Motor neuron (in vitro differentiated cells): ENCODE measurements at regions of chr16 and their contacts with region 1.

Region 1: GRCh38 chr16:84484579-84485254 is 19.7 kb downstream of the MEAK7 start:
- ATAC-seq: peak; percentile 51 to 88 (median 80)
- H3K4me3 ChIP-seq: no peak overlapping the region
- H3K27ac ChIP-seq: no peak overlapping the region
- H3K4me1 ChIP-seq: peaks cover 4 to 7% of the 10 kb centered on the region in 2 donors

Region 2: GRCh38 chr16:83926726-83927397 is 557.9 kb before region 1 on chr16:
- in situ Hi-C with region 1: loop called in 1 of 9 experiments (anchors 25 kb)
- ATAC-seq: peak; percentile 83 to 97 (median 88)
- H3K4me3 ChIP-seq: no peak overlapping the region
- H3K27ac ChIP-seq: no peak overlapping the region
- H3K4me1 ChIP-seq: peaks cover 11 to 13% of the 10 kb centered on the region in 2 donors

Region 3: DNA sequence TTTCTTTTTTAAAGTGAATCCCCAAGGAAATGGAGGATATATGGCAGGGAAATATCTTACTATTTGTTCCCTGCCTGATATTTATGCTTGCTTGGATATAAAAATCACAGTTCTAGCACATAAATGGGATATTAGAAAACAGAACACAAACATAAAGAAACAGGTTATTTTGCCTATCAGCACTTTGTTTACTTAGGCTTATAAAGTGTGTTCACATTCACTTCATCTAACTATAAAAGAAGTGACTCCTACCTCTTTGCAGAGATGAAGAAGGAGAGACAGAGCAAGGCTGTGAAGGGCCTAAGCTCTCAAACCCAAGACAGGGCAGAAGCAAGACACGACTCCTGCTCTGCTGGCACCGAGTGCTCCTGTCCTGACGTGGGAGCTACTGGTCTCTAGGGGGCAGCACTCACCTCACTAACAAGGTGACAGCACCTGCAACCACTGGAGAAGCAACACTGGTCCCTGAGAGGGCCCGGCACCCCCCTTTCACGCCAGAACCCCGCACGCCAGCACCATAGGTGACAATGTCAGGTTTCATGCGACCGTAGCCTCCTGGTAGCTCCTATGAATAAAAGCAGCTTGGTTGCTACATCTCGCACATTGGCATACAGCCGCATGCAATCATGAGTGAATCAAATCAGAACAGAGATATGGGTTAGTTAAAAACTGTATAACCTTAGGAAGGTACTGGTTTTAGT is 400.0 kb before region 1 on chr16:
- in situ Hi-C with region 1: loop called in 2 of 9 experiments (anchors 10 to 25 kb)
- ATAC-seq: peak; percentile 69 to 93 (median 79)
- H3K4me3 ChIP-seq: no peak overlapping the region
- H3K27ac ChIP-seq: no peak overlapping the region
- H3K4me1 ChIP-seq: no peaks in the 10 kb centered on the region

Region 4: DNA sequence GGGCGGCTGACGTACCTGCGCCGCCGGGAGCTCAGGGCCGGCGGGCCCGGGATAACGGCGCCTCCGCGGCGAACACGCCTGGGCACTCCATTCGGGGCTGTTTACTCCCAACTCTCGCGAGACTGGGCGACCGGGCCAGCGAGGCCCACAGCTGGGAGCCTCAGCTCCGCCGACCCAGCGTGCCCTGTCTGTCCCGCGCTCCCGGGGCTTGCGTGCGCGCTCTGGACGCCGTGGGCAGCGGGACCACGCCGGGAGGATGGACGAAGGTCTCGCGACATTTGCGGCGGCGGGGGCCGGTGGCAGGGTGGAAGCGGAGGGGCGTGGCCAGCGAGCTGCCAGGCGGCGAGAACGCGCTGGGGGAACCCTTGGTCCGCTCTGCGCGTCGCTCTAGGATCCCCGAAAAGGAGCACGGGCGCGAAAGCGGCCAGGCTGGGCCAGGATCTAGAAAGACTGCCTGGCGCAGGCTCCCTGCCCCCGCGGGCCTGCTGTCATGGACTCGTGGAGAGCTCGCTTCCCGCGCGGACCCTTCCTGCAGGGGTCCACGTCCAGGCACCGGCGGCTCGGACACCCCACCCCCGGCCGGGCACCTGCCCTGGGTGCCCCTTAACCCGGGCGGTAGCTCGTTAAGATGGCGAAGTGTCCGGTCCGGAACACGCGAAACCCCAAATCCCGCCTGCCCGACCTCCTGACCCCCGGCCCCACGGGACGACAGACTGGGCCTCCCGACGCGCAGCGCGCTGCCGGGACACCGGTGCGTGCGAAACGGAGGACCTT is 367.8 kb before region 1 on chr16 and contains the start of gene MBTPS1:
- in situ Hi-C with region 1: loop called in 2 of 9 experiments (anchors 25 kb)
- ATAC-seq: peak; percentile 92 to 97 (median 96)
- H3K4me3 ChIP-seq: peak within 1 kb of the TSS; percentile 75 to 91 (median 88)
- H3K27ac ChIP-seq: peak within 1 kb of the TSS; percentile 89 to 96
- H3K4me1 ChIP-seq: peaks cover 11 to 14% of the 10 kb centered on the region in 2 donors
- total RNA-seq, gene MBTPS1: 42.5 to 166 (median 62.3) TPM

Region 5: DNA sequence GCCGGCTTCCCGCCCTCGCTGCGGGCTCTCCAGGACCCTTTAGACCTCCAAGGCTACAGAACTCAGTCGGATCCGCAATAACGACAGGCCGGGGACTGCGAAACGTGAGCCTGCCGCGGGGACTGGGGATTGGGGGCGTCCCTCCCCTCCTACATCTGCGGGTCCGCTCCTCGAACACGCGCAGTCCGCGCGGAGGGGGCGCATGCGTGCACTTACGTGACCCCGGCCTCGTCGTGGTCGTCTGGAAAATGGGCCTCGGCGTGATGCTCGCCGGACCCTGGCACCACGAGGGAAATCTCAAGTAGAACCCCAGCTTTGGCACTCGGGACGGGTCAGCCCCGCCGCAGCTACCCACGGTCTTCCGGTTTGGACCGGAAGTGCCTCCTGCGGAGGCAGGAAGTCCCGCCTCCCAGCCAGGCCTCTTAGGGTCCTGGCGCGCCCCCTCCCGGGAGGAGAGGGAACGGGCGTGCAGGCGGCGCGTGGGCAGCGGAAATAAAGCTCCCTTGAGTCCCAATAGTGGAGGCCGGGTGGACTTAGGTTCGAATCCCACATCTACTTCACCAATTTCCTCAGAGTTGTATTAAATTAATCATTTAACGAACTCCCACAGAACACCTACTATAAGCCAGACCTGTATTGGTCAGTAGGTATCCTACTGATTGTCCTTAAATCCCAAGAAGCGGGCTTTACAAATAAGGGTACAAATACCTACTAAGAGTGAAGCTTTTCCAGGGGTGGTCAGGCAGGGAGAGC is 297.9 kb before region 1 on chr16 and contains the start of gene TAF1C:
- in situ Hi-C with region 1: loop called in 1 of 9 experiments (anchors 25 kb)
- ATAC-seq: peak; percentile 88 to 98 (median 97)
- H3K4me3 ChIP-seq: peak within 1 kb of the TSS; percentile 72 to 97 (median 83)
- H3K27ac ChIP-seq: peak within 1 kb of the TSS; percentile 25 to 55
- H3K4me1 ChIP-seq: peaks cover 9% of the 10 kb centered on the region in 2 donors
- total RNA-seq, gene TAF1C: 13.1 to 58.4 (median 18.2) TPM

Region 6: GRCh38 chr16:84277237-84277823 is 207.4 kb before region 1 on chr16:
- in situ Hi-C with region 1: loop called in 5 of 9 experiments (anchors 10 to 25 kb)
- ATAC-seq: peak in 7 of 8 experiments; percentile 21 to 93 (median 39)
- H3K4me3 ChIP-seq: no peak overlapping the region
- H3K27ac ChIP-seq: no peak overlapping the region
- H3K4me1 ChIP-seq: peaks cover 32 to 36% of the 10 kb centered on the region in 2 donors

Region 7: DNA sequence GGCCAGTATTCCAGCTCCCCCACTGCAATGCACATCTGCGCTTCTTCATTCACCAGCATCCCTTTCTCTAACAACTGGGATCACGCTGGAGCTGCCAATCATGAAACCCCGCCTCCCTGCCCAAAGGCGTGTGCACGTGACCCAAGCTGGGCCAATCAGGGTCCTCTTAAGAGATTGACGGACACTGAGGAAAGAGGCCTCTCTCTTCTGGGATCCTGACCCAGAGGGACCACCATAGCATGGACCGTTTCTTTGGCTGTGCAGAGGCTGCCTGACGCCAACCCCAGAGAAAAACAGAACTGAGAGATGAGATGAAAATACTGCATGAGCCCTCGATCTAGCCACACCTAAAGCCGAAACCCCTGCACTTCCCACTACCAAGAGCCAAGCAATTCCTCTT is 101.2 kb after region 1 on chr16:
- in situ Hi-C with region 1: no loop called
- ATAC-seq: peak in 5 of 8 experiments; percentile 92 to 99 (median 98)
- H3K4me3 ChIP-seq: no peak overlapping the region
- H3K27ac ChIP-seq: peak overlapping the region; percentile 4 to 38
- H3K4me1 ChIP-seq: peaks cover 10 to 16% of the 10 kb centered on the region in 2 donors